ENCODE measurements at regions of chr10 and their contacts with region 1.

Region 1: GRCh38 chr10:61135276-61135721 is 191.3 kb upstream of the RHOBTB1 start:
- DNase-seq: no peak
- H3K4me3 ChIP-seq: no peak overlapping the region
- H3K27ac ChIP-seq: no peak overlapping the region
- H3K4me1 ChIP-seq: peaks cover 0 to 3% (median 0%) of the 10 kb centered on the region in 4 donors
- H3K27me3 ChIP-seq: no peaks in the 10 kb centered on the region
- CTCF ChIP-seq: no peak

Region 2: DNA sequence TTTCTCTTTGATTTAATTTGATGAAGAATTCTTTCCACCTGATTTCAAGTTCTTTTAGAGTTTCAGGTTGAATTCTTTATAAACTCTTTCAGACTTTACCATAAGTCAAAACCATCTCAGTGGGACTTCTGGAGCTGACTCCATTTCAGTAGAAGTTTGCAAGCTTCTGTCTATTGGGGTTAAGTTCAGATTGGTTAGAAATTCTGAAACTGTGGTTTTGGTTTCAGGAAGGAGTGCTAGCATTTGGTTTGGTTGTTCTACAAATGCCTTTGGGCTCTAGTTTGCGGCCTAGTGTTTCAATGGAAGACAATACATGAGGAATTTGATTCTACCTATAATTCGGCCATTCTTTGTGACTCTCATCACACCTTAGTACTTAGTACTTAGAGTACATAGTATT is 14.5 kb before region 1 on chr10:
- intact Hi-C with region 1: no loop called
- DNase-seq: no peak
- H3K4me3 ChIP-seq: no peak overlapping the region
- H3K27ac ChIP-seq: no peak overlapping the region
- H3K4me1 ChIP-seq: no peaks in the 10 kb centered on the region
- H3K27me3 ChIP-seq: no peaks in the 10 kb centered on the region
- CTCF ChIP-seq: no peak

Region 3: DNA sequence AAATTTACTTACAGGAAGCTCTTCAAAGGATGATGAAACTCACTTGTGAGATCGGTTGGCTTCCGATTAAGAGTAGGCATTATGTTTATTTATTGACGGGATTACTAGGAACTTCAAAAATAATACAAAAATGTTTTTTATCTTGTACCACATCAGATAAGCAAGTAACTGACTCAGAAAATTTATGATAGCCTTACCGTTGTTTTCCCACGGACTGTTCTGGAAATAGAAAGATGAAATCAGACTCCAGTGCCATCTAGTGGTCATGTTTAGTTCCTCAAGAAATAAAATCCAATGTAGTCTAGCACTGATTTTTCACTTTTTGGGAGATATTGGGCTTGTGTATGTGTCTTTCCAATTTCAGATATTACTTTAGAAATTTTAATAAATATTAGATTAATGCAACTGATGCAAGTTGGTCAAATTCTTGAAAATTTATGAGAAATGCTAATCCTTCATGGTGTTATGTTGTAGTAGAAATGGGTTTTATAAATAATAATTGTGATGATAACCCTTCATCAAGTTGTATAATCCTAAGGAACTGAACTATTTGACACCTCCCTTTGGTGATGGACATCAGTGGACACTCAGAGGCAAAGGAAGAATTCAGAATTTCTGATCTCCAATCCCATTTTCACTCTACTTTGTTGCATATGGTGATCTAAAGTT is 149.1 kb after region 1 on chr10:
- intact Hi-C with region 1: loop called (anchors 5 kb)
- DNase-seq: no peak
- H3K4me3 ChIP-seq: no peak overlapping the region
- H3K27ac ChIP-seq: peak overlapping the region in 1 of 2 donors; percentile 23
- H3K4me1 ChIP-seq: peaks cover 0 to 5% (median 0%) of the 10 kb centered on the region in 4 donors
- H3K27me3 ChIP-seq: no peaks in the 10 kb centered on the region
- CTCF ChIP-seq: peak; percentile 77 to 79

Region 4: DNA sequence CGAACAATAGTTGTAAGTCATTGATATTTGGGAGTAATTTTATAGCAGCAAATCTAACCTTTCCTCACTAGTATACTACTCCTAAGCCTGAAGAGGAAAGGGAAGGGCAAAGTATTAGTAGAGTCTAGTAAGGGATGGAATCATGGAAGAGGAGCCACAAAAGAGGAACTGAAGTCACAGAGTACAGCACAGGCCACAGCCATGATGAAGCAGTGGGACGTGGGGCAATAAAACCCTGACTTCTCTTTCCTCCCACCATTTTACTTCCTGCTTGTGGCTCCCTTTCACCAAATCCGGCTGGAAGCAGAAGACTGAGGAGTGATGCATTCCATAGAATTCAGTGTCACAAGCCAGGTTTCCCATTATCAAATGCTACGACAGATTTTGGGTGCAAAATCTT is 586.1 kb after region 1 on chr10:
- intact Hi-C with region 1: no loop called
- DNase-seq: no peak
- H3K4me3 ChIP-seq: no peak overlapping the region
- H3K27ac ChIP-seq: no peak overlapping the region
- H3K4me1 ChIP-seq: no peaks in the 10 kb centered on the region
- H3K27me3 ChIP-seq: no peaks in the 10 kb centered on the region
- CTCF ChIP-seq: no peak

Region 5: GRCh38 chr10:61975391-61975932 is 840.2 kb after region 1 on chr10:
- intact Hi-C with region 1: no loop called
- DNase-seq: no peak
- H3K4me3 ChIP-seq: no peak overlapping the region
- H3K27ac ChIP-seq: peak overlapping the region; percentile 20 to 35
- H3K4me1 ChIP-seq: peaks cover 0 to 64% (median 43%) of the 10 kb centered on the region in 4 donors
- H3K27me3 ChIP-seq: no peaks in the 10 kb centered on the region
- CTCF ChIP-seq: no peak